ENCODE measurements at regions of chr2 and their contacts with region 1.

Region 1: GRCh38 chr2:55617175-55618024 is at the start of gene PPP4R3B:
- DNase-seq: peak; percentile 98 to 100
- H3K4me3 ChIP-seq: peak within 1 kb of the TSS; percentile 93 to 98
- H3K27ac ChIP-seq: peak within 1 kb of the TSS; percentile 97 to 100
- H3K4me1 ChIP-seq: peaks cover 6 to 18% of the 10 kb centered on the region in 2 donors
- H3K27me3 ChIP-seq: no peaks in the 10 kb centered on the region
- CTCF ChIP-seq: peak in 2 of 3 experiments; percentile 44 to 53
- total RNA-seq, gene PPP4R3B: 18.2 TPM

Region 2: DNA sequence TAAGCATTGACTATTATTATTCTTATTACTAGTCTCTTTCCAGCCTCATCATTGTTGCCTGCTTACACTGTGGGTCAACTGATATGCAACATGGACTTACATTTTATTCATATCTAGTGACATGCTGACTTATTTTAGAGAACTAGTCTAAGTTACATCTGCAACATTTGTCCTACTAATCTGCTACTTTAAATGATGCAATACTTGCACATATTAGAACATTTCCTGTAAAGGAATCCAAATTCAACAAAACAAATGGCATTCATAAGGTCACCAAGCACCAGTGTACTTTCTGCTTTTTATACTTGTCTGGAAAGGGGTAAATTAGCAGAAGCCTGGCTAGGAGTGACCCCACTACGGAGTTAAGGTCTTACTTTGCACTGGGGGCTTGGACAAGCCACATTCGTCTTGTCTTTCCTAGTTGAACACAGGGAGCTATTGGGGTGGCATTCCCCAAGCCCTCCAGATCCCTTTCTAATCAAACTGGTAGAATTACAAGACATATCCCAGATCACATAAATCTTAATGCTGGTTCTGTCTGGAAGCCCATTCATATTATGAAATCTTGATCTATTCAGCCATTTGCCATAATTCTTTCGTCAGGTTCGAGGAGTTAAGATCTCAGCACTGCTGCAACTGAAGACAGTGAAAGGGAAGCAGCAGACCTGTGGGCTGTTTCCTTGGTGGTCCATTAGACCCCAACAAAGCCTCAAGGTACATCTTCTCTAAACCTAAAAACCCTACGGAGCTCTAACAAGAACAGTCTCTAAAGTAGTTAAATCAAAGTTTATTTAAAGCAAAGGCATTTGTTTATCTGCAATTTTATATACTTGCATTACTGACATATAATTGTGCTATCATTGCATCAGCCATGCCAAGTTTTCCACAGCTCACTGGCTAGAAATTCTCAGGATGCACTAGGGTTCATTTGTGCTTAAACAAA is 517.3 kb before region 1 on chr2:
- intact Hi-C with region 1: loop called (anchors 5 kb)
- DNase-seq: no peak
- H3K4me3 ChIP-seq: peak overlapping the region in 1 of 2 donors; percentile 35
- H3K27ac ChIP-seq: peak overlapping the region; percentile 92 to 94
- H3K4me1 ChIP-seq: peaks cover 8 to 54% of the 10 kb centered on the region in 2 donors
- H3K27me3 ChIP-seq: no peaks in the 10 kb centered on the region
- CTCF ChIP-seq: no peak

Region 3: DNA sequence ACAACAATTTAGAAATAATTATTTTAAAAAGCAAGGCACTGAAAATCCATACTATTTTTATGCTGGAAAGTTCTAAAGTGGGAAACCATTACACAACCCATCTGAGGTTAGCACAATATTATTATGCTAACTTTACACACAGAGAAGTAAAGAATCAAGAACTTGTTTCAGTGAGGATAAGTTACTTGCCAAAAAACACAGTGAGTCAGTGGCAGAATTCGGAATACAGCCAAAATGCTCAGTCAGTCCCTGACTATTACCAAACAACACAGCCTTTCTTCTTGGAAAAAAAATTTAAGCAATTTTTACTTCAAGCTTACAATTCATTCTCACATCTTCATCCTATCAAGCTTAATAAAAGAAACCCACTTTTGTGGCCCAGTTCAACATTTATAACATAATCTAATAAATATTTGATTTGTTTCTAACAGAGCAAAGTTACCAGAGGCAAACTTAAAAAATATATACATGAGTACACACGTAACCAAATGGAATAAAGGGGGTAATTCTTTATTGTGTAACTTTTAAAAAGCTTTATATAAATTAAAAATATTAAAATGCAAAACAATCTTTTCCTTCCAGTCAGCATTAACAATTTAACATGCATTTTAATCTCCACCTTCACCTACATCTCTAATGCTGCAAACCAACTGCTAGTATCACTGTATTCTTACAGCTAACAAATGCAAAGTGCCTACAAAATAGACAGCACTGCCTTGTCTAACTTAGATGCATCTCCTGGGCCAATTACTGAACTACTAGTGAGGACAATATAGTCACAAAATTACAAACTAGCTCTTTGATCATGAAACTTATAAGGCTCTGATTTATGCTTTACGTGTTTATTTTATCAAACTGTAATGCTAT is 253.0 kb before region 1 on chr2:
- intact Hi-C with region 1: loop called (anchors 10 kb)
- DNase-seq: peak in 1 of 2 donors; percentile 85
- H3K4me3 ChIP-seq: no peak overlapping the region
- H3K27ac ChIP-seq: peak overlapping the region; percentile 10 to 54
- H3K4me1 ChIP-seq: peaks cover 0 to 17% of the 10 kb centered on the region in 2 donors
- H3K27me3 ChIP-seq: no peaks in the 10 kb centered on the region
- CTCF ChIP-seq: no peak

Region 4: GRCh38 chr2:55519938-55520885 is 97.2 kb before region 1 on chr2:
- intact Hi-C with region 1: loop called (anchors 2 kb)
- DNase-seq: peak in 1 of 2 donors; percentile 68
- H3K4me3 ChIP-seq: peak overlapping the region; percentile 60 to 93
- H3K27ac ChIP-seq: peak overlapping the region; percentile 83 to 84
- H3K4me1 ChIP-seq: peaks cover 3% of the 10 kb centered on the region in 2 donors
- H3K27me3 ChIP-seq: no peaks in the 10 kb centered on the region
- CTCF ChIP-seq: no peak

Region 5: GRCh38 chr2:55693181-55694134 is 76.1 kb after region 1 on chr2 and contains the start of gene PNPT1:
- intact Hi-C with region 1: loop called (anchors 1 kb)
- DNase-seq: peak; percentile 65 to 95
- H3K4me3 ChIP-seq: peak within 1 kb of the TSS; percentile 67 to 91
- H3K27ac ChIP-seq: peak within 1 kb of the TSS; percentile 24 to 45
- H3K4me1 ChIP-seq: no peaks in the 10 kb centered on the region
- H3K27me3 ChIP-seq: no peaks in the 10 kb centered on the region
- CTCF ChIP-seq: no peak
- total RNA-seq, gene PNPT1: 4.2 TPM

Measured in ascending aorta (tissue), 2 donors.